ENCODE measurements at regions of chr10 and their contacts with region 1.

Region 1: DNA sequence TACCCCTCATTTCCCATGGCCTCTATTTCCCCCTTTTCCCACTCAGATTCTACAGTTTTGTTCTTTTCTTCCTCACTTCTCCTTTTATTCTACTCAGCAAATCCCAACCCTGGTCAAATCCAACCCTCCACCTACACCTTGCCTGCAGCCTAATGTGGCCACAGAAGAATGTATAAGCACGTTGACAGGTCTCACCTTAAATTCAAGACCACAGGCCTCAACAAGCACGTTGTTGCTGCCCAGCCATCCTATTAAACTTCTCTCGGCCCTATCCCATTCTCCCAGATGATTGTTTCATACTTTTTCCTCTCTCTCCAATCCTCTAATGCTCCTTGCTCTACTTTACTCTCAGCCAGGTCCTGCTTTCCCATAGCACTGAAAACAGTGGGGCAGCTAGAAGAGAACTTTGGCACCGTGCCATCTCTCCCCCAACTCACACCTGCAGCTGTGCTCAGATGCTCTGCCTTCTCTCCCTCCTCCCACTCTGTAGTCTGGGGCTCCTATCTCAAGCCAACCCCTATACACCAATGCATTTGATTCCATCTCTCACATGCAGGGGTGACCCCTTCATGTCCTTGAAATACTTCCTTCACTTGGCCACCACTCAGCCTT is 6.8 kb upstream of the EIF3A start:
- DNase-seq: no peak
- ATAC-seq: no peak
- H3K4me3 ChIP-seq: no peak overlapping the region
- H3K27ac ChIP-seq: no peak overlapping the region
- H3K4me1 ChIP-seq: peaks cover 0 to 9% (median 0%) of the 10 kb centered on the region in 9 donors
- H3K27me3 ChIP-seq: no peaks in the 10 kb centered on the region
- CTCF ChIP-seq: no peak

Region 2: DNA sequence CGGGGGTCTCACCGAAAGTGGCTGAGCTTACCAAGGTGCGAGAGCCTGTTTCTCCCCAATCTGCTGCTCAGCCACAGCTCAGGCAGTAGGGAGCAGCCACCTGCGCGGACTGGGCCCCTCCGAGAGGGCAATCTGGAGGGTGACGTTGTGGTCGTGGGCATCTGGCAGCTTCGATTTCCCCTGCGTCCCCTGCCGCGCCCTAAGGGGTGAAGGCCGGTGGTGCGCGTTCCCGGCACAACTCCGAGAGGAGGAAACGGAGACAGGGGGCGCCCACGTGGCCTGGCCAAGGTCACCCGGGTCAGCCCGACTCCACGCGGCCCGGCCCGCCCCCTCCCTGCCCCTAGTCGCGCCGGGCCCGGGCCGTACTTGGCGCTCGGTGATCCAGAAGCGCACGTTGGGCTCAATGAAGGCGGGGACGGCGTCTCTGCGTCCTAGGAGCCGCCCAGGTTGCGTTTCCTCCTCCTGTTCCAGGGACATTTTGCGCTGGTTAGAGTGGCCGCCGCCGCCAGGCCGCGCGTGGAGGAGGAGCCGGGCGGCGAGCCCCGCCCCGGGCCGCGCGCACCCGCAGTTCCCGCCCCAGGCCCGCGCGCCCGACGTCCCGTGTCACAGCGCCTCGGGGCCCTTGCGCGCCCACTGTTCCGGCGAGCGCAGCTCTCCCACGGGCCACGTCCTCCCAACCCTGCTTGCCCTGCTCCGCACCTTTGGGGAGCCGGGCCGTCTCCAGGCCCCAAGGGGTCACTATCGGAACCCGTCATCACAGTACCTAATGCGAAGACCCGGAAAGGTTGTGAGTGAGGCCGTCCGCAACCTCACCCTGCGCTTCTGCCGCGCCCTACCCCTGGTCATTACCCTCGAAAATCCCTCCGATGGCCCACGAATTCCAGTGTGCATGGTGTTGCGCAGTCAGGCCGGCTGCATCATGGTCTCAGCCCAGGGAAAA is 78.1 kb after region 1 on chr10 and contains the start of gene SFXN4:
- intact Hi-C with region 1: no loop called
- DNase-seq: peak; percentile 80 to 84
- ATAC-seq: peak; percentile 94 to 98 (median 96)
- H3K4me3 ChIP-seq: peak within 1 kb of the TSS; percentile 36 to 98 (median 85)
- H3K27ac ChIP-seq: peak within 1 kb of the TSS; percentile 39 to 96 (median 96)
- H3K4me1 ChIP-seq: peaks cover 0 to 32% (median 19%) of the 10 kb centered on the region in 9 donors
- H3K27me3 ChIP-seq: no peaks in the 10 kb centered on the region
- CTCF ChIP-seq: peak in 3 of 9 donors; percentile 17 to 33 (median 29)
- total RNA-seq, gene SFXN4: 32.3 to 53.1 (median 43.3) TPM

Region 3: GRCh38 chr10:119542988-119543813 is 455.8 kb after region 1 on chr10:
- intact Hi-C with region 1: loop called in 1 of 10 experiments (anchors 5 kb)
- DNase-seq: peak; percentile 54 to 58
- ATAC-seq: peak; percentile 60 to 79 (median 70)
- H3K4me3 ChIP-seq: peak overlapping the region; percentile 42 to 85 (median 65)
- H3K27ac ChIP-seq: peak overlapping the region in 8 of 10 donors; percentile 40 to 89 (median 66)
- H3K4me1 ChIP-seq: peaks cover 0 to 43% (median 16%) of the 10 kb centered on the region in 9 donors
- H3K27me3 ChIP-seq: peaks cover 0 to 51% (median 48%) of the 10 kb centered on the region in 7 donors
- CTCF ChIP-seq: peak in 8 of 9 donors; percentile 17 to 66 (median 54)